Mammary epithelial cell (primary cell): ENCODE measurements at regions of chr5 and their contacts with region 1.

Region 1: GRCh38 chr5:120457839-120458507 is 6.1 kb upstream of the PRR16 start:
- DNase-seq: peak; percentile 68
- H3K4me3 ChIP-seq: no peak overlapping the region
- H3K27ac ChIP-seq: no peak overlapping the region
- H3K4me1 ChIP-seq: peaks cover 4% of the 10 kb centered on the region
- H3K27me3 ChIP-seq: no peaks in the 10 kb centered on the region
- CTCF ChIP-seq: peak; percentile 39 to 69

Region 2: GRCh38 chr5:120134944-120135343 is 323.0 kb before region 1 on chr5:
- CTCF ChIA-PET with region 1: no interaction called
- dilution Hi-C with region 1: no loop called
- in situ Hi-C with region 1: no loop called
- intact Hi-C with region 1: no loop called
- DNase-seq: no peak
- H3K4me3 ChIP-seq: no peak overlapping the region
- H3K27ac ChIP-seq: no peak overlapping the region
- H3K4me1 ChIP-seq: peaks cover 8% of the 10 kb centered on the region
- H3K27me3 ChIP-seq: no peaks in the 10 kb centered on the region
- CTCF ChIP-seq: no peak

Region 3: DNA sequence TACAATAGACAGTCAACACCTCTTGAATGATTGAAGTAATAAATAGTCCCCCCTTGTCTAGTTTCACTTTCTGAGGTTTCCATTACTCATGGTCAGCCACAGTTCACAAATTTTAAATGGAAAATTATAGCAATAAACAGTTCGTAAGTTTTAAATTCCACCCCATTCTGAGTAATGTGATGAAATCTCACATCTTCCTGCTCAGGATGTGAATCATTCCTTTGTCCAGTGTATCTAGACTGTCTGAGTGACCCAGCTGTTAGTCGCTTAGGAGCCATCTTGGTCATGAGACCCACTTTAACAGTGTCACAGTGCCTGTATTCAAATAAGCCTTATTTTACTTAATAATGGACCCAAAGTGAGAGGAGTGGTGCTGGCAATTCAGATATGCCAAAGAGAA is 305.5 kb before region 1 on chr5:
- CTCF ChIA-PET with region 1: no interaction called
- dilution Hi-C with region 1: no loop called
- in situ Hi-C with region 1: no loop called
- intact Hi-C with region 1: loop called (anchors 5 kb)
- DNase-seq: peak; percentile 89
- H3K4me3 ChIP-seq: no peak overlapping the region
- H3K27ac ChIP-seq: peak overlapping the region; percentile 60
- H3K4me1 ChIP-seq: peaks cover 11% of the 10 kb centered on the region
- H3K27me3 ChIP-seq: no peaks in the 10 kb centered on the region
- CTCF ChIP-seq: no peak

Region 4: GRCh38 chr5:120293796-120294195 is 164.2 kb before region 1 on chr5:
- CTCF ChIA-PET with region 1: no interaction called
- dilution Hi-C with region 1: no loop called
- in situ Hi-C with region 1: no loop called
- intact Hi-C with region 1: loop called (anchors 10 kb)
- DNase-seq: peak; percentile 76
- H3K4me3 ChIP-seq: no peak overlapping the region
- H3K27ac ChIP-seq: no peak overlapping the region
- H3K4me1 ChIP-seq: peaks cover 16% of the 10 kb centered on the region
- H3K27me3 ChIP-seq: no peaks in the 10 kb centered on the region
- CTCF ChIP-seq: no peak

Region 5: GRCh38 chr5:120479066-120479465 is 21.1 kb after region 1 on chr5:
- CTCF ChIA-PET with region 1: no interaction called
- dilution Hi-C with region 1: no loop called
- in situ Hi-C with region 1: no loop called
- intact Hi-C with region 1: no loop called
- DNase-seq: peak; percentile 16
- H3K4me3 ChIP-seq: no peak overlapping the region
- H3K27ac ChIP-seq: no peak overlapping the region
- H3K4me1 ChIP-seq: no peaks in the 10 kb centered on the region
- H3K27me3 ChIP-seq: no peaks in the 10 kb centered on the region
- CTCF ChIP-seq: no peak

Region 6: GRCh38 chr5:120538644-120539043 is 80.7 kb after region 1 on chr5:
- CTCF ChIA-PET with region 1: no interaction called
- dilution Hi-C with region 1: no loop called
- in situ Hi-C with region 1: no loop called
- intact Hi-C with region 1: no loop called
- DNase-seq: peak; percentile 31
- H3K4me3 ChIP-seq: no peak overlapping the region
- H3K27ac ChIP-seq: peak overlapping the region; percentile 27
- H3K4me1 ChIP-seq: peaks cover 19% of the 10 kb centered on the region
- H3K27me3 ChIP-seq: no peaks in the 10 kb centered on the region
- CTCF ChIP-seq: no peak